Activated CD8-positive, alpha-beta T cell treated with anti-CD3 and anti-CD28 coated beads for 36 hours (primary cell): ENCODE measurements at regions of chr2 and their contacts with region 1.

Region 1: GRCh38 chr2:179440642-179441251 is 176.1 kb upstream of the SESTD1 start:
- DNase-seq: no peak
- ATAC-seq: no peak
- H3K4me3 Mint-ChIP-seq: no peak overlapping the region
- H3K27ac Mint-ChIP-seq: no peak overlapping the region
- H3K4me1 Mint-ChIP-seq: no peaks in the 10 kb centered on the region
- H3K27me3 Mint-ChIP-seq: peaks cover 11% of the 10 kb centered on the region
- CTCF ChIP-seq: peak; percentile 58

Region 2: DNA sequence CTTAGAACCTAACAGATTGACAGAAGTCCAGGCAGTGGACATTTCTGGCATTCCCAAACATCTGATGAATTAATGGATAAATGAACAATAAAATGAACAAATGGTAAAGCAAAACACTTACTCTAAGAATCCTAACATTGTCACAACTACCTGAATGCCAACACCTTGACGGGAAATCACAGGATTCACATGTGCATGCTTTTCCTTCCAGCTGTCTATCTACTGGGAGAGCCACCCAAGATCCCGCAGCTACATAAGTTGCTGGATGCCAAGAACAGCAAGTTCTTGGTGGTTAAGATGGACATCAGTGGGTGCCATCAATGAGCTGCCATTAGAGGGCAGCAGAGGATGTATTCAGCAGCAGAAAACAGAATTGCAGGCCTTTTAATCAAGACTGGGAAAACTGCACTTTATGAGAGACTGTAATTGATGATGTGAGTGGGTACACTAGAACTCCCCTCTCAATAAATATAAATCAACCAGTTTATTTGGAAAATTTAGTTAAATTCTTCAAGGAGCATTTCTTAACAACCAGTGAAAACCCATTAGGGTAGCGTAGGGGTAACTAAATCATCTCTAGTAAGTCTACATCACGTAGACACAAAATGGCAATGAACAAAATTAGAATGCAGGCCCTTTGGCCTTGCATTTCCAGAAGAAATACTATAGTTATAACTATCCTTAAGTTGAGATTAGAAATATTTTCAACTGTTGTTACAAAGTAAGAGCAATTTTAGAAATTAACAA is 221.7 kb before region 1 on chr2:
- CTCF ChIA-PET with region 1: interaction called, 10 read pairs
- POLR2A ChIA-PET with region 1: no interaction called
- intact Hi-C with region 1: loop called (anchors 2 kb)
- DNase-seq: peak; percentile 70
- ATAC-seq: peak; percentile 58
- H3K4me3 Mint-ChIP-seq: no peak overlapping the region
- H3K27ac Mint-ChIP-seq: no peak overlapping the region
- H3K4me1 Mint-ChIP-seq: no peaks in the 10 kb centered on the region
- H3K27me3 Mint-ChIP-seq: peaks cover 4% of the 10 kb centered on the region
- CTCF ChIP-seq: peak; percentile 94

Region 3: DNA sequence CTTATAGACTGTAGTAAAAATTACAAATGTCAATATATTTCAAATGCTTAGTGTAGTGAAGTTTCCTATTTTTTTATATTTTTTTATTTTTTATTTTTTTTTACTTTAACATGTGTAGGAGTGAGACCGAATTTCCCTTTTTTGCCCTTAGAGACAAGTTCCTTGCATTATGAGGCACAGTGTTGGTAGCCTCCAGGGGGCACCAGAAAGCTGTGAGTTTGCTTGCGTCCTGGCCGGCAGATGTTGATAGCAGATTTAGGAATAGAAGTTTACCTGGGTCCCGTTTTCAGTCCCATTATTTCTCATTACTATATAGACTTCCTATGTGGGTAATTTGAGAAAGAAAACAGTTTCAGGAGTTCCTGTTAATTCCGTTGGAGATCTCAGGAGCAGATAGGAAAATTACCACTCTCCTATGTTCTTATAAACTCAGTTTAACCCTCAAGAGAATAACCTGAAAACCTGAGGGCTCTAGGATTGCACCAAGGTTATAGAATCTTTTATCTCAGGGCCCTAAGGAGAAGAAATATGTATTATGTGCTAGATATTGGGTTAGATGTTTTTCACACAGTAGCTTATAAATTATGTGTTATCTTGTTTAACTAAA is 18.6 kb before region 1 on chr2:
- CTCF ChIA-PET with region 1: interaction called, 10 read pairs
- POLR2A ChIA-PET with region 1: interaction called, 3 read pairs
- intact Hi-C with region 1: no loop called
- DNase-seq: peak; percentile 74
- ATAC-seq: no peak
- H3K4me3 Mint-ChIP-seq: no peak overlapping the region
- H3K27ac Mint-ChIP-seq: no peak overlapping the region
- H3K4me1 Mint-ChIP-seq: no peaks in the 10 kb centered on the region
- H3K27me3 Mint-ChIP-seq: peaks cover 11% of the 10 kb centered on the region
- CTCF ChIP-seq: peak; percentile 67

Region 4: DNA sequence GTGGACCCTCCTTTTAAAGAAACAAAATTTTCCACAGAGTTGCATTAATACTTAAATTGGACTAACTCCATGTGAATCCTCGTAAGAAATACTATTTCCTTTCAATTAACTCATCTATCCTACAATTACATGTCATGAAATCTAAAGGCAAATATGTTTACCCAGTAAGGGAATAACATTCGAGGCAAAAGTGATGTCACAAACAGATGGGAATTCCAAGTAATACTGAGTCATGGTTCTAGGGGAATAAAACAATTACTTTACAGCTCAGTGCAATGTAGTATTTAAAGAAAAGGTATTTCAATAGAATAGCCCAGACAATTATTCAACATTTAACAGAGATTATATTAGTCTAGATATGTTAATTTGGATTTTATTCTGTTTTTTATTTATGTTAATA is 214.9 kb after region 1 on chr2:
- CTCF ChIA-PET with region 1: no interaction called
- POLR2A ChIA-PET with region 1: no interaction called
- intact Hi-C with region 1: no loop called
- DNase-seq: no peak
- ATAC-seq: no peak
- H3K4me3 Mint-ChIP-seq: no peak overlapping the region
- H3K27ac Mint-ChIP-seq: no peak overlapping the region
- H3K4me1 Mint-ChIP-seq: no peaks in the 10 kb centered on the region
- H3K27me3 Mint-ChIP-seq: no peaks in the 10 kb centered on the region
- CTCF ChIP-seq: no peak

Region 5: GRCh38 chr2:179951680-179952079 is 510.9 kb after region 1 on chr2:
- CTCF ChIA-PET with region 1: no interaction called
- POLR2A ChIA-PET with region 1: no interaction called
- intact Hi-C with region 1: no loop called
- DNase-seq: no peak
- ATAC-seq: no peak
- H3K4me3 Mint-ChIP-seq: no peak overlapping the region
- H3K27ac Mint-ChIP-seq: no peak overlapping the region
- H3K4me1 Mint-ChIP-seq: no peaks in the 10 kb centered on the region
- H3K27me3 Mint-ChIP-seq: no peaks in the 10 kb centered on the region
- CTCF ChIP-seq: no peak